ENCODE measurements at regions of chr6 and their contacts with region 1.

Region 1: DNA sequence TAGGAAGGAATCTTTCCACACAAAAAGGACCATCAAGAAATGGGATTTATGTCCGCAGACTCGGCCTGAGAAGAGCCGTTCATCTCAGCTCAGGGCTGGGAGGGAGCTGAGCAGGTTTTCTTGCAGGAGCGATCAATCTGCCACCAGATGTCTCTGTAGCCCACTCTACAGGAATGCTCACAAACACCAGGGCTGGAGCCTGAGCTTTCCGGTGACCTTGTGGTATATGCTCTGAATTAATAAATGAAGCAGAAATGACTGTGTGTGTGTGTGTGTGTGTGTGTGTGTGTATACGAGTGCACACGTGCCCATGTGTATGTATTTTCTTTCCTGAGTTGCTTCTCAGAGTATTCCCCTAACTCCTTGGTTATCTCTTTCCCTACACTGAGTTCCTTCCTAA is 12.0 kb downstream of the CD83 start:
- DNase-seq: peak in 4 of 5 donors; percentile 54 to 57 (median 56)
- ATAC-seq: peak; percentile 71 to 94 (median 90)
- H3K4me3 ChIP-seq: no peak overlapping the region
- H3K27ac ChIP-seq: no peak overlapping the region
- H3K4me1 ChIP-seq: peaks cover 0 to 14% (median 2%) of the 10 kb centered on the region in 12 donors
- H3K27me3 ChIP-seq: no peaks in the 10 kb centered on the region
- CTCF ChIP-seq: peak; percentile 41 to 78 (median 64)
- POLR2A ChIP-seq: no peak

Region 2: GRCh38 chr6:15504581-15505350 is 1375.2 kb after region 1 on chr6:
- intact Hi-C with region 1: loop called in 2 of 10 experiments (anchors 5 to 10 kb)
- DNase-seq: peak; percentile 75 to 81 (median 78)
- ATAC-seq: peak; percentile 72 to 87 (median 78)
- H3K4me3 ChIP-seq: peak overlapping the region in 10 of 12 donors; percentile 10 to 50 (median 33)
- H3K27ac ChIP-seq: peak overlapping the region; percentile 67 to 89 (median 79)
- H3K4me1 ChIP-seq: peaks cover 0 to 56% (median 43%) of the 10 kb centered on the region in 12 donors
- H3K27me3 ChIP-seq: no peaks in the 10 kb centered on the region
- CTCF ChIP-seq: no peak
- POLR2A ChIP-seq: no peak